ENCODE measurements at regions of chr3 and their contacts with region 1.

Region 1: DNA sequence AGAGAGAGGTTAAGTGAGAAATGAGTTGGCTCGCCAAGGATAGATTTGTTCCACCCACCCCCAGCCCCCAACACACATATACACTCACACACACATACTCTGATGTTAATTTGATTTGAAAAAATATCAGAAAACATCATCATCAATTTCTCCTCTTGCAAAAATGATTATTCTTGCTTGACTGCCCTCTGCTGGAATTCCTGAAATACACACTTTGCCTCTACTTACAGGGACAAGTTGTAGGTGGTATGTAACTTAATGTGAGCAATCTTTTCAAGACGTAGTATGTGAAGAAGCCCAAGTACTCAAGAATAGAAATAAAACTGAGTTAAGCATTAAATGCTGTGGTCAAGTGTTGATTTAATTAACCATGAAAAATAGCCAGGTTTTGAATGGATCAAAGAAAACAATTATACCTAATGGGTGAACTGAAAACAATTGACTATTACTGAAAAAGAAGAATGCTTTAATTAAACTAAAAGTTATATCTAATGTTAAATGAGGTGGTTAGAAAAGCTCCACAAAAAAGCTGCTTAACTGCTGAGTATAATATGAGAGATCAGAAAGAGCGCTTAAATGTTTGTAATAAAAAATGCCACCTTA is 46.6 kb upstream of the MDFIC2 start:
- DNase-seq: peak; percentile 5
- H3K4me3 ChIP-seq: no peak overlapping the region
- H3K27ac ChIP-seq: no peak overlapping the region
- H3K4me1 ChIP-seq: no peaks in the 10 kb centered on the region
- H3K27me3 ChIP-seq: peaks cover 2% of the 10 kb centered on the region
- CTCF ChIP-seq: peak; percentile 64 to 71

Region 2: GRCh38 chr3:70064194-70064779 is 294.8 kb before region 1 on chr3:
- CTCF ChIA-PET with region 1: no interaction called
- dilution Hi-C with region 1: no loop called
- in situ Hi-C with region 1: no loop called
- intact Hi-C with region 1: loop called (anchors 1 kb)
- DNase-seq: peak; percentile 3
- H3K4me3 ChIP-seq: no peak overlapping the region
- H3K27ac ChIP-seq: no peak overlapping the region
- H3K4me1 ChIP-seq: no peaks in the 10 kb centered on the region
- H3K27me3 ChIP-seq: peaks cover 3% of the 10 kb centered on the region
- CTCF ChIP-seq: peak; percentile 60 to 67

Region 3: DNA sequence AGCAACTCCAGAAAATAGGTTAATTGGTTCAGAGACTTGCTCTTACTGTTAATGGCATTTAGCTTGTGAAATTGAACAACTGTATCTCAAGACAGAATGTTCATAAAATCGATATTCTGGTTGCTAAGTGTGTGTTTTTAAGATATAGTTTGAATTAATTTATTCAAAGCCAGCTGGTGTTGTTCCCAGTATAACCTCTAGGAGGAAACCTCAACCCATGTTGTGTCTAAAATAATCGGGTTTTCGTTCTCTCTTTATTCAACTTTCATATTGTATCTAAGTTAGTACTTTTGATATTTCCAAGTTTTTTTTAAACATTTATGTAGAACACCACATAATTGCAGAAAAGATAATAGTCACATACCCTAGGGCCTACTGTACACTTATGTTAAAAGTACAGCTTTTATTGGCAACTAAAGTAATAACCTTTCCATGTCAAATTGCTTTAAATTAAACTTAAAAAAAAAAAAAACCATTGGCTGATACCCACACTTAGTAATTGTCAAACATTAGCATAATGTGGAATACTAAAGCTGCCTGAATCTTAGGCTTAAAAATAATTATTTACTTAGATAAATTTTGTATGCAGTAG is 268.7 kb before region 1 on chr3:
- CTCF ChIA-PET with region 1: no interaction called
- dilution Hi-C with region 1: no loop called
- in situ Hi-C with region 1: no loop called
- intact Hi-C with region 1: loop called (anchors 10 kb)
- DNase-seq: no peak
- H3K4me3 ChIP-seq: no peak overlapping the region
- H3K27ac ChIP-seq: no peak overlapping the region
- H3K4me1 ChIP-seq: no peaks in the 10 kb centered on the region
- H3K27me3 ChIP-seq: peaks cover 2% of the 10 kb centered on the region
- CTCF ChIP-seq: peak; percentile 66 to 68

Region 4: GRCh38 chr3:70120357-70121121 is 238.5 kb before region 1 on chr3:
- CTCF ChIA-PET with region 1: interaction called, 6 read pairs
- dilution Hi-C with region 1: no loop called
- in situ Hi-C with region 1: loop called in 1 of 2 experiments (anchors 25 kb)
- intact Hi-C with region 1: loop called (anchors 1 kb)
- DNase-seq: peak; percentile 48
- H3K4me3 ChIP-seq: no peak overlapping the region
- H3K27ac ChIP-seq: no peak overlapping the region
- H3K4me1 ChIP-seq: no peaks in the 10 kb centered on the region
- H3K27me3 ChIP-seq: no peaks in the 10 kb centered on the region
- CTCF ChIP-seq: peak; percentile 94 to 98

Measured in mammary epithelial cell (primary cell).